Mammary epithelial cell (primary cell): ENCODE measurements at regions of chr2 and their contacts with region 1.

Region 1: GRCh38 chr2:219441451-219442255 is 7.0 kb downstream of the SPEG start:
- DNase-seq: no peak
- H3K4me3 ChIP-seq: peak overlapping the region; percentile 40 to 63 (median 60)
- H3K27ac ChIP-seq: no peak overlapping the region
- H3K4me1 ChIP-seq: peaks cover 51% of the 10 kb centered on the region
- H3K27me3 ChIP-seq: no peaks in the 10 kb centered on the region
- CTCF ChIP-seq: no peak

Region 2: GRCh38 chr2:219452838-219453317 is 11.2 kb after region 1 on chr2:
- CTCF ChIA-PET with region 1: no interaction called
- dilution Hi-C with region 1: no loop called
- in situ Hi-C with region 1: no loop called
- intact Hi-C with region 1: loop called (anchors 1 kb)
- DNase-seq: peak; percentile 99
- H3K4me3 ChIP-seq: no peak overlapping the region
- H3K27ac ChIP-seq: peak overlapping the region; percentile 89
- H3K4me1 ChIP-seq: peaks cover 46% of the 10 kb centered on the region
- H3K27me3 ChIP-seq: no peaks in the 10 kb centered on the region
- CTCF ChIP-seq: no peak